Activated CD8-positive, alpha-beta T cell treated with anti-CD3 and anti-CD28 coated beads, Interleukin-2, amount 10 ng/mL, durations not matched to agents 7 days and 5 days (primary cell): ENCODE measurements at regions of chr6 and their contacts with region 1.

Region 1: DNA sequence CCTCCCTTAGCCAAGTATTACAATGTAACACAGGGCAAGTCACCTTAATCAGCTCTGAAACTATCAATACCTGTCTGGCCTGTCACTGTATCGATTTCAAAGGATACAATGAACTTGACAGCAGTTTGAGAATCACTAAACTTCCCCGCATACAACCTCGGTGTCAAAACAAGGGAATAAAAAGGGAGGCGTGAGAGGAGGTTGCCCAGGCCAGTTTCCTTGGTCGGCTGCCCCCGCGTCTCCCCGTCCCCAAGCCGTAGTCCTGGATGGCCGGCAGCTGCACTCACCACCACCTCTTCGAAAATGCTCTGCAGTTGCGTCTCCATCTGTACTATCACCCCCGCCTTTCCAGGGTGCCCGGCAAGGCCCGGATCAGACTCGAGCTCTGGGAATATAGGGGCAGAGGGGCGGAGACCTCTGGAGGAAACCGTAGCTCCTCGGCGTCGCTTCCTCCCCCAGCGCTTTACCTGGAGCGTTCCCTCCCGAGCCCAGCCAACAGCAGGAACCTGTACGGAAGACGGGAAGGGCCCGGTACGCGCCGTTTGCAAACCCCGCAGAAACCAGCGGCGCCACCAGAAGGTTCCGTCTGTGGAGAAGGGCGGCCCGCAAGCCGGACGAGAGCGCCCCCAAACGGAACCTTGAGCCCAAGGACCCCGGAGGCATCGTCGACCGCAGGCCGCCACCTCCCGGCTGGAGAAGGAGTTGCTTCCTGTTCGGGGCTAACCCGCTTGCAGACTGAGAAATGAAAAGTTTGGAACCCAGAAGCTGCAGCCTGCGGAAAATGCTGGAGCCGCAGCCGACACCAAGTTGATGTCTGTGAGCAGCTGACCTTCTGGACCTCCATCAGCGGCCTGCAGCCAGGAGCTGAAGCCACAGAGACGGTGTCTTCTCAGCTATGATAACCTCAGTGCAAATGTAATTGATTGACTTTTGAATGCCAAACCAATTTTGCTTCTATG is at the start of gene MED23:
- DNase-seq: peak; percentile 95
- ATAC-seq: peak; percentile 93
- H3K4me3 Mint-ChIP-seq: peak within 1 kb of the TSS; percentile 98
- H3K27ac Mint-ChIP-seq: peak within 1 kb of the TSS; percentile 94
- H3K4me1 Mint-ChIP-seq: peaks cover 27% of the 10 kb centered on the region
- H3K27me3 Mint-ChIP-seq: no peaks in the 10 kb centered on the region
- total RNA-seq, gene MED23: 26.1 to 27.8 TPM

Region 2: DNA sequence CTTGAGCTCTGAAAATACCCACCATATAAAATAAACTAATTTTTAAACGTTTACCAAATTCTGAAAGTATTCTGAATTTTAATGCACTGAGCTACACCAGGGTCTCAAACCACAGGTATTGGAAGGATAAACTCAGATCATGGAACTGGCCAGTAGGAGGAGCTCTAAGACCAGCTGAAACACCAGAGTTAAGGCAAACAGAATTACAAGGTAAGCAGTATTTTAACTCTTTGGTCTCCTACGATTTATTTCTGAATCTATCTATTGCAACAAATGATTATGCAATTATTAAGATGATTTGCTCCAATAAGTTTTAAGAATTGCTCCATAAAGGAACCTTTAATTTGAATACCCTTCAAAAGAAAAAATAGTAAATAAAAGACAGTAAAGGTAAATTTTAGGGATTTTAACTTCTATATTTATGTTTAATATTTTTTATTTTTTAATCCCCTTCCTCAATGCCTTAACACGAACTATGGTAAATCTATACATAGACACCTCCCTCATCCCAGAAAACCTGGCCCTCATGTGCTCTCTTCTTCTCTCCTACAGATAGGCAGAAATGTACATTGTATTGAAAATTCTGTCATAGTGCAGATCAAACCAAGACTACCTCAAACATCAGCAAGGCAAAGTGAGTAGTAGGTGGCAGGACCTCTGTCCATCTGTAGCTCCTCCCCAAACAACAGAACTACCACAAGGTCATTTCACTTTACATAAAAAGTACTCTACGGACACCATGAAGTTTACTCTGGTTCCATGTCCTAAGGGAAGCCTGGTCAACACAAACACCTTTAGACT is 742.4 kb before region 1 on chr6:
- CTCF ChIA-PET with region 1: interaction called, 23 read pairs
- POLR2A ChIA-PET with region 1: no interaction called
- DNase-seq: peak; percentile 85
- ATAC-seq: peak; percentile 87
- H3K4me3 Mint-ChIP-seq: no peak overlapping the region
- H3K27ac Mint-ChIP-seq: no peak overlapping the region
- H3K4me1 Mint-ChIP-seq: no peaks in the 10 kb centered on the region
- H3K27me3 Mint-ChIP-seq: no peaks in the 10 kb centered on the region

Region 3: GRCh38 chr6:131199568-131200272 is 428.3 kb before region 1 on chr6:
- CTCF ChIA-PET with region 1: interaction called, 29 read pairs
- POLR2A ChIA-PET with region 1: interaction called, 5 read pairs
- DNase-seq: peak; percentile 89
- ATAC-seq: peak; percentile 93
- H3K4me3 Mint-ChIP-seq: peak overlapping the region; percentile 75
- H3K27ac Mint-ChIP-seq: peak overlapping the region; percentile 96
- H3K4me1 Mint-ChIP-seq: peaks cover 65% of the 10 kb centered on the region
- H3K27me3 Mint-ChIP-seq: no peaks in the 10 kb centered on the region

Region 4: DNA sequence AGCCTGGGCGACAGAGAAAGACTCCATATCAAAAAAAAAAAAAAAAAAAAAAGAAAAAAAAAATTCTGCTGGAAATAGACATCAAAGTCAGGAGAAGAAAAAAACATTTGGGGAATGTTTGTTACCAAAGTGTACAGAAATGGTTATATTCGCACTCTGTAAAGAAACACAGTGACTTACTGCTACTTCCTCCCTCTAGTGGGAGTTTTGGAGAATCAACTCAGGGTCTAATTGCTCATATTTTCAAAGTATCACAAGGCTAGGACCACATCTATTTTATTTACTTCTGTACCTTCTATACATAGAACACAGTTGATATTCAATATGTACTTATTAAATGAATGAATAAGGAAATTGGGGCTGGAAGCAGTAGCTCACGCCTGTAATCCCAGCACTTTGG is 30.6 kb before region 1 on chr6:
- CTCF ChIA-PET with region 1: interaction called, 32 read pairs
- POLR2A ChIA-PET with region 1: no interaction called
- DNase-seq: no peak
- ATAC-seq: no peak
- H3K4me3 Mint-ChIP-seq: no peak overlapping the region
- H3K27ac Mint-ChIP-seq: no peak overlapping the region
- H3K4me1 Mint-ChIP-seq: no peaks in the 10 kb centered on the region
- H3K27me3 Mint-ChIP-seq: no peaks in the 10 kb centered on the region

Region 5: DNA sequence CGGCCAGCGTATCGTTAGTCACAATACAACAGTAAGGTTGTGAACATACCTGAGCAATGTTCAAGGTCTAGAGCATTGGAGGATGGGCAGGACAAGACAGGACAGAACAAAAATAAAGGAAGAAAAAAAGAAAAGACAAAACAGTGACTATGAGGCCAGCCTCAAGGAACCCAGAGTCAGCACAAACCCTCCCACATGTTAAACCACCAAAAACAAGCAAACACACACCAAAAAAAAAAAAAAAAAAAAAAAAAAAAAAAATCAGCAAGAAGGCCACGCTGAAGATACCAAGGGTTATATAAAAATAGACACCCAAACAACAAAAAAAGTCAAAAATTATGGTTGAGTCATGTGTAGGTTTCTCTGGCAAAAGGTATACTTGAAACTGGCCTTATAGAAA is 12.7 kb before region 1 on chr6:
- CTCF ChIA-PET with region 1: interaction called, 33 read pairs
- POLR2A ChIA-PET with region 1: interaction called, 5 read pairs
- DNase-seq: no peak
- ATAC-seq: no peak
- H3K4me3 Mint-ChIP-seq: no peak overlapping the region
- H3K27ac Mint-ChIP-seq: no peak overlapping the region
- H3K4me1 Mint-ChIP-seq: no peaks in the 10 kb centered on the region
- H3K27me3 Mint-ChIP-seq: no peaks in the 10 kb centered on the region

Region 6: GRCh38 chr6:131685266-131685780 is 57.3 kb after region 1 on chr6:
- CTCF ChIA-PET with region 1: interaction called, 11 read pairs
- POLR2A ChIA-PET with region 1: no interaction called
- DNase-seq: no peak
- ATAC-seq: no peak
- H3K4me3 Mint-ChIP-seq: no peak overlapping the region
- H3K27ac Mint-ChIP-seq: no peak overlapping the region
- H3K4me1 Mint-ChIP-seq: peaks cover 18% of the 10 kb centered on the region
- H3K27me3 Mint-ChIP-seq: peaks cover 22% of the 10 kb centered on the region